ENCODE measurements at regions of chr4 and their contacts with region 1.

Region 1: DNA sequence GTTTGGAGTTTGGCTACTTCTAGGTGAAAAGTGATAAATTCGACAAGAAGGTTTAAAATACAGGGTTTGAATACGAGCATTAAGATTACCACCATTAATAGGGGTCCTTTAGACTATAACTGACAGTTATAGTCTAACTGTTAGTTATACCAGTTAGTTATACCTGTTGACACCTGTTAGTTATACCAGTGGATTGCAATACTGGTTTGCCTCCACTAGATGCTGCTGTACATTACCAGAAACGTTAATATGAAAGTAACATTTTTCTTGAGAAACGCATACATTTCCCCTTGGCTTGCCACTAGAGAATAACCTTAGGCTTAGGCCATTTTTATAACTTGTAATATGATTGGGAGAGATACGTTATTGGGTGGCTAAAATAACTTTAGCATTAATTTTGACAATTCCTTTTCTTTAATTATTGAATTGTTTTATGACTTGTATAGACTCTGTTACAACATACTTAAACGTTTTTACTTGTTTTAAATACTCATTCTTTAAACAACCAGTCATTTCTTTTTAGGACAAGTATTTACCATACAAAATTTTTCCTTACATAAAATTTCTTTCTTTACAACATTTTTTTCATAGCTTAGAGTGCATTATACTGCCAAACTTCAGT is 911.2 kb downstream of the FSTL5 start:
- DNase-seq: no peak
- ATAC-seq: no peak
- H3K4me3 ChIP-seq: no peak overlapping the region
- H3K27ac ChIP-seq: no peak overlapping the region
- H3K4me1 ChIP-seq: no peaks in the 10 kb centered on the region
- H3K27me3 ChIP-seq: no peaks in the 10 kb centered on the region
- CTCF ChIP-seq: peak; percentile 18 to 55 (median 36)
- POLR2A ChIP-seq: no peak

Region 2: DNA sequence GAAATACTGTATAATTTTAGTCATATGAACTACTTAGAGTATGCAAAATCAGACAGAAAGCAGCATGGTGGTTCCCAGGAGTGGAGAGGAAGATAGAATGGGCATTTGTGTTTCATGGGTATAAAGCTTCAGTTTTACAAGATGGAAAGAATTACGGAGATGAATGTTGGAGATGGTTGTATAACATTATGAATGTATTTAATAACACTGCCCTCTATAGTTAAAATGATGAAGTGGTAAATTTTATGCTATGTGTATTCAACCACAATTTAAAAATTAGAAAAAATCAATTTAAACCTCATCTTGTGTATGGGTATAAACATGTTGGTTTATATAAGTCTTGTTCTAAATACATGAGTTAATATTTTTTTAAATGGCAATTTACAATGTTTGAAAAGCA is 390.1 kb after region 1 on chr4:
- intact Hi-C with region 1: loop called in 2 of 10 experiments (anchors 10 kb)
- DNase-seq: no peak
- ATAC-seq: no peak
- H3K4me3 ChIP-seq: no peak overlapping the region
- H3K27ac ChIP-seq: no peak overlapping the region
- H3K4me1 ChIP-seq: no peaks in the 10 kb centered on the region
- H3K27me3 ChIP-seq: no peaks in the 10 kb centered on the region
- CTCF ChIP-seq: peak in 3 of 12 donors; percentile 8 to 21 (median 9)
- POLR2A ChIP-seq: no peak

Region 3: DNA sequence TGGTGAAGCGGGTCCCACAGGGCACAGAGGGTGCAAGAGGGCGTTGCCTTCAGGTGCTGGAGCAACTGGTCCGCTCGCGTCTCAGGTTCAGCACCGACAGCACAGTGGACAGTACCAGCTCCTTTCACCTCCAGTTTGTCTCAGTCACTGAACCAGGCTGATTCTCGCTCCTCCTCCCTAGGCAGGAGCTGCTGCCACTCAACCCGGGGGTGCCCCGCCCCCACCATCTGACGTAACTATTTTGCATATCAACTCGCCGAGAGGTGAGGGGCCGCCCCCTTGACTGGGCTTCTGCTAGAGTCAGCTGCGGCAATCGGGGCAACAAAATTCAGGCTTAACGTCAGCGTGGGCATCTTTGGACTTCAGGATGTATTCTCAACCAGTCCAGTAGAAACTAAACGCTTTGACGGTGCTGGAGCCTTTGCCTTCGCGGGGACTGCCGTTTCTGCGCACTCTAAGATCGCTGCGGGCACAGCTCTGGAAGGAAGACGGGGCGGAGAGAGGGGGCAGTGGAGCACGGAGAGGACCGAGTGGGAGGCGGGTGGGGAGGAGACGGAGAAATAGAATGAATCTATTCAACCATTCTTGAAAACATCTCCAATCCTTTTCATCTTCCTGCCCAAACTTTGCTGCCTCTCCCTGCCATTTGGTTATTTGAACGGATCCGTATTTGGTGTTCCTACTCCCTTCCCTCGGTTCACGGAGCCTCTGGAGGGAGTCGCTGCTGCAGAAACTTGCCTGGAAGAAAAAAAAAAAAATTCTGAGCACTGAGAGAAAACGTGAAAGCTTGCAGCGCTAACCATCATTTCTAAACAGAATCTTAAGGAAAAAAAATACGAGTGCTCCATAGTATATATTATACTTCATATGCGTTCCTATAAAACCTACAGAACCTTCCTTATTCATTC is 911.5 kb after region 1 on chr4 and contains the start of gene FSTL5:
- intact Hi-C with region 1: loop called in 1 of 10 experiments (anchors 10 kb)
- DNase-seq: peak in 4 of 5 donors; percentile 9 to 58 (median 38)
- ATAC-seq: peak in 3 of 4 donors; percentile 67 to 82 (median 70)
- H3K4me3 ChIP-seq: peak within 1 kb of the TSS in 10 of 12 donors; percentile 8 to 41 (median 26)
- H3K27ac ChIP-seq: no peak within 1 kb of the TSS
- H3K4me1 ChIP-seq: peaks cover 0 to 11% (median 0%) of the 10 kb centered on the region in 12 donors
- H3K27me3 ChIP-seq: peaks cover 0 to 19% (median 5%) of the 10 kb centered on the region in 9 donors
- CTCF ChIP-seq: no peak
- POLR2A ChIP-seq: no peak
- total RNA-seq, gene FSTL5: not detected

Region 4: DNA sequence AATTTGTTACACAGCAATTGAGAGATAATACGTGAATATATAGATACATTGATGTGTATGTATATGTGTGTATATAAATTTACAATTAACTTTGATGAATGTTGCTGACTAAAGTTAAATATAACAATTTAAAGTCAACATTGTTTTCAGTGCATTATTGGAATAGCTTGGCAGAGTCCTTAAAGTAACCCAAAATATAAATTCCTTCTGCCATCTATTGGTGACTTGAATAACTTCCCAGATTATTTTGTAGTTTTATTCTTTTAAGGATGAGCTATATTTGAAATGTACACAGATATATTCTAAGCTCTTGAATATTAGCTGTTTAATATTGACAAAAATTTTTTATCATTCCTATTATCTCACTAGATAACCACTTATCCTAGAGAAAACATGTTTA is 1209.3 kb after region 1 on chr4:
- intact Hi-C with region 1: loop called in 2 of 10 experiments (anchors 10 kb)
- DNase-seq: no peak
- ATAC-seq: no peak
- H3K4me3 ChIP-seq: no peak overlapping the region
- H3K27ac ChIP-seq: no peak overlapping the region
- H3K4me1 ChIP-seq: no peaks in the 10 kb centered on the region
- H3K27me3 ChIP-seq: no peaks in the 10 kb centered on the region
- CTCF ChIP-seq: peak in 9 of 12 donors; percentile 16 to 47 (median 33)
- POLR2A ChIP-seq: no peak